ENCODE measurements at regions of chr1 and their contacts with region 1.

Region 1: DNA sequence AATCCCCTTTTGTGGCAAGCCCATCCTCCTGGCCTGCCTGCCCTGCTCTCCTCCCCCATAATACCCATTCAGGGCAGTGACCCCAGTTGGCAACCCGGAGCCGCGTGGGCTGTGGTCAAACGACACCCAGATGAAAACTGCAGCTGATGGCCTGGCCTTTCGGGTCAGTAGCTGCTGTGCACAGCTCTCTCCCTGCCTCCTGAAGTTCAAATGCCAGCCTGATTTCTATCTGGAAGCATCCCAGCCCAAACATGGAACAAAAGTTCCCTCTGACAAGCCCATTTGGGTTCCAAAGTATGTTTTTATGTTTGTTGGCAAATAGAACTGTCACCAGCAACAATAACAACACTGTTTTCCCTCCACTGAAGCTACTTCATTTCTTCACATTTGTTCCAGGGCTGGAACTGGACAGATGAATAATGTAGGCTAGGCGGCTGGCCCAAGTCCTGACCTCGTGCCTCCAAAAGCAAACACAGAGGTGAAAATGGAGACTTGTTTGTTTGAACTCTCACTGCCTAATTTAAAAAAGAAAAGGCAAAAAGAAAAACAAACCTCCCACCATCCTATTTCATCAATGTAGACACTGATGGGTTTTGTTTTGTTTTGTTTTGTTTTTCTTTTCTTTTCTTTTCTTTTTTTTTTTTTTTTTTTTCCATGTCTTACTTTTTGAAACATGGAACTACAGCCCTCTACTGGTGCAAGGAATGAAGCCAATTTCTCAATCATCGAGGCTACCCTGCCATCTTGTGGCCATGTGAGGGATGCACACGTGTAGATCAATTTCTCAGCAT is 179.0 kb downstream of the ADSS2 start:
- DNase-seq: no peak
- H3K4me3 ChIP-seq: no peak overlapping the region
- H3K27ac ChIP-seq: peak overlapping the region; percentile 64 to 74 (median 72)
- H3K4me1 ChIP-seq: peaks cover 0 to 25% (median 23%) of the 10 kb centered on the region in 4 donors
- H3K27me3 ChIP-seq: no peaks in the 10 kb centered on the region
- CTCF ChIP-seq: peak; percentile 88 to 96 (median 93)
- EP300 ChIP-seq: no peak
- POLR2A ChIP-seq: no peak

Region 2: GRCh38 chr1:243343970-243344937 is 928.4 kb before region 1 on chr1:
- intact Hi-C with region 1: loop called (anchors 2 kb)
- DNase-seq: no peak
- H3K4me3 ChIP-seq: no peak overlapping the region
- H3K27ac ChIP-seq: no peak overlapping the region
- H3K4me1 ChIP-seq: no peaks in the 10 kb centered on the region
- H3K27me3 ChIP-seq: no peaks in the 10 kb centered on the region
- CTCF ChIP-seq: peak; percentile 68 to 70 (median 69)
- EP300 ChIP-seq: no peak
- POLR2A ChIP-seq: no peak

Region 3: GRCh38 chr1:243748706-243749283 is 523.9 kb before region 1 on chr1:
- intact Hi-C with region 1: loop called (anchors 10 kb)
- DNase-seq: no peak
- H3K4me3 ChIP-seq: no peak overlapping the region
- H3K27ac ChIP-seq: no peak overlapping the region
- H3K4me1 ChIP-seq: peaks cover 0 to 46% (median 17%) of the 10 kb centered on the region in 4 donors
- H3K27me3 ChIP-seq: no peaks in the 10 kb centered on the region
- CTCF ChIP-seq: peak; percentile 69 to 84 (median 80)
- EP300 ChIP-seq: no peak
- POLR2A ChIP-seq: no peak

Region 4: GRCh38 chr1:243850452-243851256 is 422.0 kb before region 1 on chr1:
- intact Hi-C with region 1: loop called (anchors 5 kb)
- DNase-seq: no peak
- H3K4me3 ChIP-seq: peak overlapping the region; percentile 93 to 99 (median 96)
- H3K27ac ChIP-seq: peak overlapping the region; percentile 97 to 99 (median 99)
- H3K4me1 ChIP-seq: peaks cover 3 to 34% (median 30%) of the 10 kb centered on the region in 4 donors
- H3K27me3 ChIP-seq: no peaks in the 10 kb centered on the region
- CTCF ChIP-seq: no peak
- EP300 ChIP-seq: no peak
- POLR2A ChIP-seq: no peak

Region 5: DNA sequence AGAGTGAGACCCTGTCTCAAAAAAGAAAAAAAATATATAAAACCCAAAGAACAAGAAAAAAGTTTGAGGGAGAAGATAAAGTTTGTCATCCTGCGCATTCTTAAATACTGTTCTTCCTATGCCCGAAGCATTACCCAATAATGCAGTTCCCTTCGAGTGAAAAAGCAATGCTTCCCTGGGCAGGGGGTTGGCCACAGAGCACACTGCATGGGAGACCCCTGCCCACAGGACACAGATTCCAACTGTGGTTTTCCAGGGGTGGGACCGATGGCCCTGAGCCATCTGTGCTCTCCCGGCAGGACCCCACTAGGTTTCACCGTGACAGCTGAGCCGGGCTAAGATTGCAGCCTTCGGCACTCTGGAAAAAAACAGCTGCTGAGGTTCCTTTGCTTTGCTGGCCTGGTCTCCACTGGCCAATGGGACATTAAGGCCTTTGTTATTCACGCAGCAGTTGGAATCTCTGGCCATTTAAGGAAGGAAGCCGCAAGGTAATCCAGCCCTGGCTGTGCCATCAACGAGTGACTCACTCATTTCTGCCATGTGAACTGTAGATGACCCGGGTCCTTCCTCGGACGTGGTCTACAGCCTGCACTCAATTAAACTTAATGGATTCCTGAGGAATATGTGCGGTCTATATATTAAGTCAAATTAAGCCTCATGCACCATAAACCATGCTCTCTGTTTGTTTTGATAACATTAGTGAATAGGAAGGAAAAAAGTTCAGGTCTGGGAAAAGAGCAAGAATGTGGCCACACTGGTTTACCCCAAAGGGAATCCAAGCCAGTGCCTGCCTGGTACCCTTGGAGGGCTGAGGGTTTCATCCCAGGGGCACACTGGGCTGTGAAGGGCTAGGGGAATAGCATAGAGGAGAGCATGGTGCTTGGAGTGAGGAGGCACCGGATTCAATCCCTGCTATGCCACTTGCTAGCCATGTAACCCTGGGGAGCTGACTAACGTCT is 58.4 kb before region 1 on chr1:
- intact Hi-C with region 1: no loop called
- DNase-seq: no peak
- H3K4me3 ChIP-seq: no peak overlapping the region
- H3K27ac ChIP-seq: peak overlapping the region; percentile 65 to 77 (median 66)
- H3K4me1 ChIP-seq: peaks cover 4 to 46% (median 34%) of the 10 kb centered on the region in 4 donors
- H3K27me3 ChIP-seq: no peaks in the 10 kb centered on the region
- CTCF ChIP-seq: no peak
- EP300 ChIP-seq: no peak
- POLR2A ChIP-seq: no peak

Region 6: DNA sequence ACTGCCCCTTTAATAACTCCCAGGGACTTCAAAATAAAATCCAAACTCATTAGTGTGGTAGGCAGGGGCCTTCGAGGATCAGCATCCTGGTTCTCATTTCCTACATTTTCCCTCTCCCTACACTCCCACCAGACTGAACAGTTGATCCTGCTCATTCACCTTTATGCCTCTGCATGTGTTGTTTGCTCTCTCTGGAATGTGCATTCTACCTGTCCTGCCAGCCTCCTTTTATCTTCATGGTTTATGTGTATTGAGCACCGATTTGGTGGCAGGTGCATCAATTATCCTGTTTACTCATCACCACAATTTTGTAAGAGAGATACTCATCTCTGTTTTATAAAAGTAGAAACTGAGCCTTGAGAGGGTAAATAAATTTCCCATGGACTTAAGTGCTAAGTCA is 54.1 kb after region 1 on chr1:
- intact Hi-C with region 1: no loop called
- DNase-seq: no peak
- H3K4me3 ChIP-seq: no peak overlapping the region
- H3K27ac ChIP-seq: no peak overlapping the region
- H3K4me1 ChIP-seq: peaks cover 6 to 32% (median 17%) of the 10 kb centered on the region in 4 donors
- H3K27me3 ChIP-seq: no peaks in the 10 kb centered on the region
- CTCF ChIP-seq: no peak
- EP300 ChIP-seq: no peak
- POLR2A ChIP-seq: no peak

Region 7: GRCh38 chr1:244451951-244452795 is 179.5 kb after region 1 on chr1:
- intact Hi-C with region 1: loop called (anchors 10 kb)
- DNase-seq: peak; percentile 100
- H3K4me3 ChIP-seq: peak overlapping the region; percentile 74 to 99 (median 85)
- H3K27ac ChIP-seq: peak overlapping the region; percentile 96 to 97 (median 96)
- H3K4me1 ChIP-seq: peaks cover 20 to 39% (median 37%) of the 10 kb centered on the region in 4 donors
- H3K27me3 ChIP-seq: no peaks in the 10 kb centered on the region
- CTCF ChIP-seq: peak; percentile 42 to 78 (median 53)
- EP300 ChIP-seq: no peak
- POLR2A ChIP-seq: no peak